CD4-positive, alpha-beta T cell (primary cell): ENCODE measurements at regions of chr11 and their contacts with region 1.

Region 1: DNA sequence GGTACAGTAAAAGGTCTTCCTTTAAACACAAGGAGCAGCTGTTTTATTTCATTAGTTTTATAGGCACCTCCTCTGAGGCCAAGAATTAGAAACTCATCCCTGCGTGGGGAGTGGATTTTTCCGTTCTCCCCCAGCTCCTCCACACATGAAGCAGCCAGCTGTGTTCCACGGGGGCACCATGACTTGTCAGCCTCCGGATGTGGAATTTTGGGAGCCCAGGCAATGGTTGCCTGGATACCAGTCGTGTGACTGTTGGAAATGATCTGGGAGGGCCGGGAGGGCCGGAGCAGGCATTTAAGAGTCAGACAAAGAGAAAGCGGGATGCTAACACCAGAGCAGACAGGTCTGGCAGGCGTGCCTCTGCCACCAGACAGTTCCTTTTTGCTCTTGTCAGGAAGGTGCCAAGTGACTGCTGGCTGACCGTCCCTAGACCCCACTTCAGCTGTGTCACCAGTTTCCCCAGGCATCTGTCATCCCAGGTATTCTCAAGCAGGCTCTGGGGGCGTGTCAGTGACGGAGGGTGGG is 15.9 kb upstream of the CDC42EP2 start:
- DNase-seq: no peak
- ATAC-seq: no peak
- H3K4me3 ChIP-seq: no peak overlapping the region
- H3K4me3 Mint-ChIP-seq: no peak overlapping the region
- H3K27ac ChIP-seq: no peak overlapping the region
- H3K27ac Mint-ChIP-seq: no peak overlapping the region
- H3K4me1 ChIP-seq: no peaks in the 10 kb centered on the region
- H3K4me1 Mint-ChIP-seq: no peaks in the 10 kb centered on the region
- H3K27me3 ChIP-seq: no peaks in the 10 kb centered on the region
- H3K27me3 Mint-ChIP-seq: no peaks in the 10 kb centered on the region
- CTCF ChIP-seq: no peak

Region 2: DNA sequence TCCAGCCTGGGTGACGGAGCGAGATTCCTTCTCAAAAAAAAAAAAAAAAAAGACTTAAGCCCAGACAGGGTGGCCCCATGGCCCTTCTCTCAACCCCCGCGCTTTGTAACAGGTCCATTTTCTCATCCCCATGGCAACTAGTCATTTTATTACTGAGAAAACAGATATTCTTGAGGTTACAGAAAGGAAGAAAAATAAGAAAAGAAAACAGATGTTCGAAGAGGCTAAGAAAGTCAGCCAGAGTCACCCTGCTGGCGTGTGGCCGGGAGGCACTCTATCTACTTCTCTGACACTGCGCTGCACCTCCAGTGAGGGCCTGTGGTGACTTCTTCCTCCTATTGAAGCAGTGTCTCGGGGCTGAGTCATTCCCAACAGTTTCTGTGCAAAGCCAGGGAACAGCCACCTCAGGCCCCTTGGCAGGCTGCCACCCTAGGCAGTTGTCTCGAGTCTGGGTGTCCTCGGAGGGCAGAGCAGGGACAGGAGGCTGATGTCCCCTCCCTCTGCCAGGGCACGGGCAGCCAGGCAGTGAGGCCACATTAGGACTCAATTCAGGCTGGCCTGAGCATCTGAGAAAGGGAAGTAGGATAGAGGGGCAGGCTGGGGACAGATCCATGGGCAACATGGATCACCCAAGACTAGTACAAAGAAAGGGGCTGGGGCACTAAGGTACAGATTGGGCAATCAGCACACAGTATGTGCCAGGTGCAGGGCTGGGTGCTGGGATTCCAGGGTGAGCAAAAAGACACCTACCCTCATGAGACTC is 148.0 kb before region 1 on chr11:
- CTCF ChIA-PET with region 1: no interaction called
- POLR2A ChIA-PET with region 1: no interaction called
- intact Hi-C with region 1: loop called in 1 of 2 experiments (anchors 5 kb)
- DNase-seq: peak in 3 of 14 experiments; percentile 18 to 74 (median 69)
- ATAC-seq: no peak
- H3K4me3 ChIP-seq: no peak overlapping the region
- H3K4me3 Mint-ChIP-seq: no peak overlapping the region
- H3K27ac ChIP-seq: no peak overlapping the region
- H3K27ac Mint-ChIP-seq: no peak overlapping the region
- H3K4me1 ChIP-seq: no peaks in the 10 kb centered on the region
- H3K4me1 Mint-ChIP-seq: no peaks in the 10 kb centered on the region
- H3K27me3 ChIP-seq: no peaks in the 10 kb centered on the region
- H3K27me3 Mint-ChIP-seq: no peaks in the 10 kb centered on the region
- CTCF ChIP-seq: no peak

Region 3: GRCh38 chr11:65243773-65244172 is 54.9 kb before region 1 on chr11:
- CTCF ChIA-PET with region 1: no interaction called
- POLR2A ChIA-PET with region 1: no interaction called
- intact Hi-C with region 1: no loop called
- DNase-seq: no peak
- ATAC-seq: no peak
- H3K4me3 ChIP-seq: no peak overlapping the region
- H3K4me3 Mint-ChIP-seq: no peak overlapping the region
- H3K27ac ChIP-seq: no peak overlapping the region
- H3K27ac Mint-ChIP-seq: no peak overlapping the region
- H3K4me1 ChIP-seq: no peaks in the 10 kb centered on the region
- H3K4me1 Mint-ChIP-seq: no peaks in the 10 kb centered on the region
- H3K27me3 ChIP-seq: no peaks in the 10 kb centered on the region
- H3K27me3 Mint-ChIP-seq: no peaks in the 10 kb centered on the region
- CTCF ChIP-seq: no peak

Region 4: DNA sequence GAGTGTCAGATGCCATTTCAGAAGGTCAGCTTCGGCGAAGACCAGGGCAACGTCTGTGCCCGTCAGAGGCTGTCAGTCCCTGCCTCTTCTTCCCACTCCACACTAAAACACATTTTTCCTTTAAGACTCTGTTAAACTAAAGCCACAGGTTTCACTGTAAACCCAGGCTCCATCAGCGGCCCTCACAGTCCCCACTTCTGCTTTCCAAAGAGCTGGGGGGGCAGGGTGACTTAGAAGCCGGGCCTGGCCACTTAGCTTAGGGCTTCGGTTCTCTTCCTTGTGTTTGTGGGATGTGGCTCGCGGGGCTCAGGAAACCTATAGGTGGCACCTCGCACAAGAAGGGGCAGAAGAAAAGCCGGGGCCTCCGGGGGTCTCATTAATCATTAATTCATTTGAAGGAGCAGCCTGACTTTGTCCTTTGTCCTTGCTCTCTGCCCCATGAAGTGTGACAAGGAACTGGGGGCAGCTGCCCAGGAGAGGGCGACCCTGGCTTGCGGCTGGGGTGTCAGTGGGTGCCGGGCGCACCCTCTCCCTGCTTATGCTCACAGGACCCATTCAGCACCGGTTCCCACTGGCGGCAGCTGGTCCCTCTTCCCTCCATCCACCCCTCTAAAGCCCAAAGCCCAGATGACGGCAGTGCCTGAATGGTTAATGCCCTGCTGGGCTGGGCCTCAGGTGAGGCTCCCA is 79.6 kb after region 1 on chr11:
- CTCF ChIA-PET with region 1: no interaction called
- POLR2A ChIA-PET with region 1: no interaction called
- intact Hi-C with region 1: no loop called
- DNase-seq: peak in 3 of 14 experiments; percentile 35 to 52 (median 49)
- ATAC-seq: no peak
- H3K4me3 ChIP-seq: no peak overlapping the region
- H3K4me3 Mint-ChIP-seq: no peak overlapping the region
- H3K27ac ChIP-seq: peak overlapping the region in 1 of 2 donors; percentile 7
- H3K27ac Mint-ChIP-seq: peak overlapping the region; percentile 72
- H3K4me1 ChIP-seq: peaks cover 38% of the 10 kb centered on the region
- H3K4me1 Mint-ChIP-seq: peaks cover 23% of the 10 kb centered on the region
- H3K27me3 ChIP-seq: no peaks in the 10 kb centered on the region
- H3K27me3 Mint-ChIP-seq: no peaks in the 10 kb centered on the region
- CTCF ChIP-seq: no peak